ENCODE measurements at regions of chr11 and their contacts with region 1.

Region 1: GRCh38 chr11:61187505-61188130 is 15.7 kb upstream of the PGA3 start:
- DNase-seq: peak; percentile 89
- ATAC-seq: peak; percentile 92
- H3K4me3 Mint-ChIP-seq: no peak overlapping the region
- H3K27ac Mint-ChIP-seq: no peak overlapping the region
- H3K4me1 Mint-ChIP-seq: peaks cover 2% of the 10 kb centered on the region
- H3K27me3 Mint-ChIP-seq: peaks cover 3% of the 10 kb centered on the region

Region 2: DNA sequence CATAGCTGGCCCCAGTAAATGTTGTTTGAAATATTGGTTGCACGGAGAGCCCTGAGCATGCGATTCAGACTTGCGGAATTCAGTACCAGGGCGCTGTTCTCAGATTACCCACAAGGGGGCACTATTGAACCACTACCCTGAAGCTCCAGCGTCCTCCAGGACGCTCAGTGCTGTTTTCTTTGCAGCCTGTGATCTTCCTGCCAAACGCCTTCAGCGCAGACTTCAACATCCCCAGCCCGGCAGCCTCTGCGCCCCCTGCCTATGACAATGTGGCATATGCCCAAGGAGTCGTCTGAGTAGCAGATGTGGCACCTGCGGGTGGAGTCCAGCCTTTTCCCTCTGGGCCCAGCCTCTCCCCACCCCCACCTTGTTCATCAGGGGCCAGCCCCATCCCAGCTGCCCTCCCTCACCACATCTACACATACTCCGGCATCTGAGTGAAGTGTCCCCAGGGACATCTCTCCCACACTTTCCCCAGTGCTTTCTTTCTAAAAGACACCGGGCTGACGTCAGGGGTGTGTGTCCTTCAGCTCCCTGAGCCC is 412.1 kb before region 1 on chr11:
- CTCF ChIA-PET with region 1: interaction called, 4 read pairs
- POLR2A ChIA-PET with region 1: no interaction called
- intact Hi-C with region 1: loop called (anchors 1 to 5 kb)
- DNase-seq: peak; percentile 91
- ATAC-seq: peak; percentile 98
- H3K4me3 Mint-ChIP-seq: no peak overlapping the region
- H3K27ac Mint-ChIP-seq: no peak overlapping the region
- H3K4me1 Mint-ChIP-seq: peaks cover 7% of the 10 kb centered on the region
- H3K27me3 Mint-ChIP-seq: no peaks in the 10 kb centered on the region

Region 3: GRCh38 chr11:60913793-60914632 is 273.6 kb before region 1 on chr11 and contains the start of gene TMEM109:
- CTCF ChIA-PET with region 1: interaction called, 3 read pairs
- POLR2A ChIA-PET with region 1: no interaction called
- intact Hi-C with region 1: loop called in 1 of 2 experiments (anchors 1 kb)
- DNase-seq: peak; percentile 93
- ATAC-seq: peak; percentile 78
- H3K4me3 Mint-ChIP-seq: peak within 1 kb of the TSS; percentile 87
- H3K27ac Mint-ChIP-seq: peak within 1 kb of the TSS; percentile 97
- H3K4me1 Mint-ChIP-seq: peaks cover 58% of the 10 kb centered on the region
- H3K27me3 Mint-ChIP-seq: no peaks in the 10 kb centered on the region
- total RNA-seq, gene TMEM109: 80.3 to 89.1 TPM

Region 4: GRCh38 chr11:60970369-60970774 is 217.2 kb before region 1 on chr11:
- CTCF ChIA-PET with region 1: interaction called, 4 read pairs
- POLR2A ChIA-PET with region 1: no interaction called
- intact Hi-C with region 1: loop called (anchors 1 kb)
- DNase-seq: peak; percentile 91
- ATAC-seq: peak; percentile 51
- H3K4me3 Mint-ChIP-seq: peak overlapping the region; percentile 87
- H3K27ac Mint-ChIP-seq: peak overlapping the region; percentile 98
- H3K4me1 Mint-ChIP-seq: peaks cover 16% of the 10 kb centered on the region
- H3K27me3 Mint-ChIP-seq: peaks cover 2% of the 10 kb centered on the region

Region 5: DNA sequence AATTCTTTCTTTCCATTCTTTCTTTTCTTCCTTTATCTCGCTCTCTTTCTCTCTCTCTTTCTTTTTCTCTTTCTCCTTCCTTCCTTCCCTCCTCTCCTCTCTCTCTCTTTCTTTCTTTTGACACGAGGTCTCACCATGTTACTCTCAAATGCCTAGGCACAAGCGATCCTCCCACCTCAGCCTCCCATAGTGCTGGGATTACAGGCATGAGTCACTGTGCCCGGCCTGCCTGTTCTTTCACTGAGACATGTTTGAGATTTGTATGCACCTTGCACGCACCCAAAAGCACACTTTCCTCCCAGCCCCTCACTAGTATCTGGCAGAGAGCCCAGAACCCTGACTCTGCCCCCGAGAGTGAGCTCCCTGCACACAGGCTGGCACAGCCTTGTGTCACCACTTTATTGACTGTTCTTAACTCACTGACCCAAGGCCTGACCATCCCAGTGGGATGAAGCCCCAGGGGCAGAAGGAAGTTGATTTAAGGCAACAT is 159.3 kb before region 1 on chr11:
- CTCF ChIA-PET with region 1: no interaction called
- POLR2A ChIA-PET with region 1: no interaction called
- intact Hi-C with region 1: loop called in 1 of 2 experiments (anchors 5 kb)
- DNase-seq: peak; percentile 87
- ATAC-seq: peak; percentile 45
- H3K4me3 Mint-ChIP-seq: peak overlapping the region; percentile 79
- H3K27ac Mint-ChIP-seq: peak overlapping the region; percentile 97
- H3K4me1 Mint-ChIP-seq: peaks cover 87% of the 10 kb centered on the region
- H3K27me3 Mint-ChIP-seq: no peaks in the 10 kb centered on the region

Region 6: GRCh38 chr11:61071208-61071681 is 116.4 kb before region 1 on chr11:
- CTCF ChIA-PET with region 1: no interaction called
- POLR2A ChIA-PET with region 1: no interaction called
- intact Hi-C with region 1: no loop called
- DNase-seq: peak; percentile 78
- ATAC-seq: peak; percentile 87
- H3K4me3 Mint-ChIP-seq: peak overlapping the region; percentile 59
- H3K27ac Mint-ChIP-seq: peak overlapping the region; percentile 93
- H3K4me1 Mint-ChIP-seq: peaks cover 95% of the 10 kb centered on the region
- H3K27me3 Mint-ChIP-seq: no peaks in the 10 kb centered on the region

Region 7: DNA sequence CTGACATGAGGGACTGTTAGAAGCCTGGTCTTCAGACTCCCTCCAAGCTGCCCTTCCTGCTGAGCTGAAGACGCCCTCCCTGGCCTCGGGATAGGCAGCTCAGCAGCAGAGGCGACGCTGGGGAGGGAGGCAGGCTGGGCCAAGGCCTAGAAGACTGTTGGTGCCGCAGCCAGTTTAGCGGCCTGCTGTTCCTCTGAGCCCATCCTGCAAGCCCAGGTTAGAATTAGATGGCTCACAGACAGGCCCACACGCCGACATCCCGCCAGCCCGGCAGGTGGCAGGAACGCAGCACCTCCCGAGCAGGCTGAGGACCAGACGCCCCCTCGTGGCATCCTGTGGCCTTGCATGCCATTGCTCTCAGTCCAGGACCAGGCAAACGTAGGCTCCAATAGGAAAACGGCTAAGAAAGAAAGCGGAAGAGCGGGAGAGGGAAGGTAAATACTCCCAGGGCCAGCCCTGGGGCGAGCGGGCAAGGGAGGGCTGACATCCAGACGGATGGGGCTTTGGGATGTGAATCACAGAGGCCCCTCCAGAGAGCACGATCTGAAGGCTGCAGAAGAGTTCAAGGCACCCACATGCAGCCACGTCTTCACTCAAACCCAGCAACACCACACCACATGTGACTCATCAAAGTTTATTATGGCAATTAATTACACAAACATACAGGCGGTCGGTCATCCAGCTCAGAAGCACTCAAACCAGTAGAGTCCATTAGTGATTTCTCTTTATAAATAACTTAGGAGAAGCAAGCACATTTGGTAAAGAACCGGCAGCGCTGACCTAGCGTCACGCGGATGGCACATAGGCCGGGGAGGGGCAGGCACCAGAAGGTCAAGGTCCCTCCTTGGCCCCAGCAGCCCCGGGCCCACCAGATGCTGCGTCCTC is 57.7 kb before region 1 on chr11:
- CTCF ChIA-PET with region 1: interaction called, 7 read pairs
- POLR2A ChIA-PET with region 1: no interaction called
- intact Hi-C with region 1: loop called (anchors 1 kb)
- DNase-seq: peak; percentile 97
- ATAC-seq: peak; percentile 89
- H3K4me3 Mint-ChIP-seq: peak overlapping the region; percentile 14
- H3K27ac Mint-ChIP-seq: peak overlapping the region; percentile 64
- H3K4me1 Mint-ChIP-seq: peaks cover 27% of the 10 kb centered on the region
- H3K27me3 Mint-ChIP-seq: no peaks in the 10 kb centered on the region

Measured in activated CD4-positive, alpha-beta T cell treated with anti-CD3 and anti-CD28 coated beads for 36 hours (primary cell).